CD8-positive, alpha-beta T cell (primary cell): ENCODE measurements at regions of chr9 and their contacts with region 1.

Region 1: GRCh38 chr9:125758986-125759763 is 12.0 kb downstream of the PBX3 start:
- DNase-seq: peak in 1 of 9 experiments; percentile 33
- ATAC-seq: no peak
- H3K4me3 ChIP-seq: peak overlapping the region; percentile 7 to 28
- H3K4me3 Mint-ChIP-seq: peak overlapping the region; percentile 69
- H3K27ac ChIP-seq: no peak overlapping the region
- H3K27ac Mint-ChIP-seq: no peak overlapping the region
- H3K4me1 ChIP-seq: peaks cover 6% of the 10 kb centered on the region
- H3K4me1 Mint-ChIP-seq: peaks cover 24% of the 10 kb centered on the region
- H3K27me3 ChIP-seq: no peaks in the 10 kb centered on the region
- H3K27me3 Mint-ChIP-seq: no peaks in the 10 kb centered on the region
- CTCF ChIP-seq: no peak

Region 2: GRCh38 chr9:125325831-125326230 is 433.3 kb before region 1 on chr9:
- CTCF ChIA-PET with region 1: no interaction called
- POLR2A ChIA-PET with region 1: no interaction called
- intact Hi-C with region 1: no loop called
- DNase-seq: no peak
- ATAC-seq: no peak
- H3K4me3 ChIP-seq: no peak overlapping the region
- H3K4me3 Mint-ChIP-seq: no peak overlapping the region
- H3K27ac ChIP-seq: no peak overlapping the region
- H3K27ac Mint-ChIP-seq: no peak overlapping the region
- H3K4me1 ChIP-seq: no peaks in the 10 kb centered on the region
- H3K4me1 Mint-ChIP-seq: no peaks in the 10 kb centered on the region
- H3K27me3 ChIP-seq: no peaks in the 10 kb centered on the region
- H3K27me3 Mint-ChIP-seq: no peaks in the 10 kb centered on the region
- CTCF ChIP-seq: no peak

Region 3: GRCh38 chr9:125839317-125839716 is 80.1 kb after region 1 on chr9:
- CTCF ChIA-PET with region 1: no interaction called
- POLR2A ChIA-PET with region 1: no interaction called
- intact Hi-C with region 1: loop called in 1 of 2 experiments (anchors 2 kb)
- DNase-seq: no peak
- ATAC-seq: no peak
- H3K4me3 ChIP-seq: no peak overlapping the region
- H3K4me3 Mint-ChIP-seq: no peak overlapping the region
- H3K27ac ChIP-seq: no peak overlapping the region
- H3K27ac Mint-ChIP-seq: no peak overlapping the region
- H3K4me1 ChIP-seq: no peaks in the 10 kb centered on the region
- H3K4me1 Mint-ChIP-seq: peaks cover 19% of the 10 kb centered on the region
- H3K27me3 ChIP-seq: no peaks in the 10 kb centered on the region
- H3K27me3 Mint-ChIP-seq: no peaks in the 10 kb centered on the region
- CTCF ChIP-seq: no peak

Region 4: DNA sequence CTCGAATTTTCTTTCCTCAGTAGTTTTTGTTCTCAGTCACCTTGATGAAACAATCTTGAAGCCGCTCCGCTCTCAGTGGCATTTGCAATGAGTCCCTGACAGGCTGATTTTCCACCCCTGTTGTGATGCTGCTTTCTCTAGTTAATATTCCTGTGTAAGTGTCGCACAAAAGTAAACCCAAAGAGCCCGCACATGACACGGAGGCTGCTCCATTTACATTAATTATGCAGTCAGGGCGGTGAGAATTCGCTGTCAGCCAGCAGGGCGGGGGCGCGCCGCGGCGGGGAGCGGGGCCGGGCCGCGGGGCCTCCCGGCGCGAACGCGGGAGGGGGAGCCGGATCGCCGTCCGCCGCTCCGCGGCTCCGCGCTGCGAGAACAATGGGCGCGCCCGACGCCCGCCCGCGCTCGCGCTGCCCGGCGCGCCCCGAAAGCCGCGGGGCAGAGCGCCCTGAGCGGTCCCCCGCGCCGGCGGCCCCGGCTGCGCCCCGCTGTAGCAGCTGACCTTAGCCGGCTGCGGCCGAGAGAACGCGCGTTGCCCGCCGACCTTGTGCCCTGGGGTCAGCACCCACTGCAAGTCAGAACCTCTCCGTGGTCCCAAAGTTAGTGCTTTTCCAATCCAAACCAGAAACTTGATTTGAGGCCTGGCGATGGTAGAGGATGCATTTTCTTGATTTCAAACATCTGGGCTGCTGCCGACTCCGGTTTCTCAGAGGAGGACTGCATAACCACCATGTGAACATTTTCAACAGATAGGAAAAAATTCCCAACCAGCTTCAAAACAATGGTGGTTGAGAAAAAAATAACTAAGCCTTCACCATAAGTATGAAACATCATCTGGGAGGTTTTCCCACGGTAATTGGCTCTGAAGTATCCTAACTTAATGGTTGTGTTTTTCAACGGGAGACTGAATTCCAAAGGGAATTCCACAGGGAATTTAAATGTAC is 130.6 kb after region 1 on chr9:
- CTCF ChIA-PET with region 1: no interaction called
- POLR2A ChIA-PET with region 1: no interaction called
- intact Hi-C with region 1: loop called in 1 of 2 experiments (anchors 5 kb)
- DNase-seq: peak in 8 of 9 experiments; percentile 6 to 61 (median 40)
- ATAC-seq: peak; percentile 84
- H3K4me3 ChIP-seq: peak overlapping the region; percentile 37 to 56
- H3K4me3 Mint-ChIP-seq: peak overlapping the region; percentile 81
- H3K27ac ChIP-seq: no peak overlapping the region
- H3K27ac Mint-ChIP-seq: no peak overlapping the region
- H3K4me1 ChIP-seq: peaks cover 5% of the 10 kb centered on the region
- H3K4me1 Mint-ChIP-seq: peaks cover 12% of the 10 kb centered on the region
- H3K27me3 ChIP-seq: peaks cover 3 to 4% of the 10 kb centered on the region in 2 experiments
- H3K27me3 Mint-ChIP-seq: peaks cover 24% of the 10 kb centered on the region
- CTCF ChIP-seq: no peak

Region 5: DNA sequence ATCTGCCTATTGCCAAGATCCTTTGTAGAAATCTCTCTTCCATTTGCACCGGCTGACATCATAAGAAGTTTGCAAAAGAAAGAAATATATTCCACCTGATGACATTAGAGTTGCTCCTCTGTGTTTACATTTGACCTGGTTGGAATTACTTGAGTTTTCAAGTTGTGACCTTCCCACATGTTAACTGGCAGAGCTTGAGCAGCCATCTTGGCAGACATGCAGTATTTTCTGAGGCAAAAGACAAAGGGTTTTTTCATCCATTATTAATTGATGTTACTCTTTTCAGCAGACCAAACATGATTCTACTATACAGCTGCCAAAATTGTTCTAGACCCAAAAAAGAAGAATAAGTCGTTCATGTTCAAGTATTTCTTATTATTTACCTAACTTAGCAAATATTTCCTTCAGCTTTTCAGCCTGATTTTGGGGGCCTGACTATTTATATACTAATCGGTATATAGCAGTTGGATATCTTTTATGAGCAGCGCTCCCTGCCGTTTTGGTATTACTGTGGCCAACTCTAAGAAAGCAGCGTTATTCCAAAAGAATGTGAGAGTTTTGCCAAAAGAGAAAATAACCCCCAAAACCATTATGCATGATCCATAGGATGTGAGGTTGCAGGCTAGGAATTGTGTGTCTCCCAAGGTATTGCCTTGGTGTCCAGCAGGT is 200.9 kb after region 1 on chr9:
- CTCF ChIA-PET with region 1: no interaction called
- POLR2A ChIA-PET with region 1: no interaction called
- intact Hi-C with region 1: no loop called
- DNase-seq: no peak
- ATAC-seq: no peak
- H3K4me3 ChIP-seq: no peak overlapping the region
- H3K4me3 Mint-ChIP-seq: no peak overlapping the region
- H3K27ac ChIP-seq: no peak overlapping the region
- H3K27ac Mint-ChIP-seq: no peak overlapping the region
- H3K4me1 ChIP-seq: no peaks in the 10 kb centered on the region
- H3K4me1 Mint-ChIP-seq: no peaks in the 10 kb centered on the region
- H3K27me3 ChIP-seq: no peaks in the 10 kb centered on the region
- H3K27me3 Mint-ChIP-seq: no peaks in the 10 kb centered on the region
- CTCF ChIP-seq: no peak